Activated CD4-positive, alpha-beta memory T cell treated with anti-CD3 and anti-CD28 coated beads for 36 hours (primary cell): ENCODE measurements at regions of chr2 and their contacts with region 1.

Region 1: DNA sequence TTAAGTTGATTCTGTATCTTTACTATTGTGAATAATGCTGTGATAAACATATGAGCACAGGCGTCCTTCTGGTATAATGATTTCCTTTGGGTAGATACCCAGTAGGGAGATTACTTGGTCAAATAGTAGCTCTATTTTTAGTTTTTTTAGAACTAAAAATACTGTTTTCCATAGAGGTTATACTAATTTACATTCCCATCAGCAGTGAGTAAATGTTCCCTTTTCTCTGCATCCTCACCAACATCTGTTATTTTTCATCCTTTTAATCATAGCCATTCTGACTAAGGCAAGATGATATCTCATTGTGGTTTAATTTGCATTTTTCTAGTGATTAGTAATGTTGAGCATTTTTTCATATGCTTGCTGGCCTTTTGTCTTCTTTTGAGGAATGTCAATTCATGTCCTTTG is 35.1 kb downstream of the PMS1 start:
- DNase-seq: no peak
- H3K4me3 Mint-ChIP-seq: no peak overlapping the region
- H3K27ac Mint-ChIP-seq: peak overlapping the region; percentile 82
- H3K4me1 Mint-ChIP-seq: peaks cover 16% of the 10 kb centered on the region
- H3K27me3 Mint-ChIP-seq: no peaks in the 10 kb centered on the region

Region 2: GRCh38 chr2:189723192-189723591 is 96.1 kb before region 1 on chr2:
- CTCF ChIA-PET with region 1: no interaction called
- POLR2A ChIA-PET with region 1: no interaction called
- intact Hi-C with region 1: loop called (anchors 1 kb)
- DNase-seq: no peak
- H3K4me3 Mint-ChIP-seq: no peak overlapping the region
- H3K27ac Mint-ChIP-seq: no peak overlapping the region
- H3K4me1 Mint-ChIP-seq: peaks cover 13% of the 10 kb centered on the region
- H3K27me3 Mint-ChIP-seq: no peaks in the 10 kb centered on the region

Region 3: DNA sequence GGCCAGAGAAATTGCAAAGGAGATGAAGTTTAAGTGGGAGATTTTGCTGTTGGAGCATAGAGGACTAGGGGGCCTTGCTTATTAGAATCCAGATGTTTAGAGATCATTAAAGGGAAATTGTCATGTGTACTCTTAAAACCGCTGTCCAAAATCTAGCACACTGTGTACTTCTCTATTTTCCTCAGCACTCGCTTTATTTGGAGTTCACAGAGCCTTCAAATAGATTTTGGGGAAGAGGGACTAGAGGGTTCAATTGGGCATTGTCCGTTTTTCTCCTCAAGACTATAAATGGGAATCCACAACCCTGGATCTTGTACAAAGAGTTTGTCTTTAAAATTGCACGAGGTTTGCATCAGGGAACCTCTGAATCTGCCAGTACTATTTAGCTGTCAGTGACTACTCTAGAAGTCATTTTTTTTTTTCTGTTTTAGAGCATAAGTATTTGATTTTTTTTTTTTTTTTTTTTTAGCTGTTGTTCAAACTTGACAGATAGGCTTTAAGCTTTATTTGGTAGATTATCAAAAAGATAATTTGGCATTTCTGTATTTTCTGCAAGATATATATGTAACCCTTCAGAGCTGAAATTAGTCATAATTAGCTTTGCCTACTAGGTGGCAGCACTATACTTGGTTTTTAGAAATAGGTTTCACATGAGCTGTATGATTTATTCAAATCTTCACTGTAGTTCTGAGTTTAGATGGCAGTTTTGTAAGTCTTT is 20.8 kb before region 1 on chr2:
- CTCF ChIA-PET with region 1: interaction called, 4 read pairs
- POLR2A ChIA-PET with region 1: no interaction called
- intact Hi-C with region 1: loop called (anchors 1 kb)
- DNase-seq: no peak
- H3K4me3 Mint-ChIP-seq: no peak overlapping the region
- H3K27ac Mint-ChIP-seq: no peak overlapping the region
- H3K4me1 Mint-ChIP-seq: peaks cover 3% of the 10 kb centered on the region
- H3K27me3 Mint-ChIP-seq: no peaks in the 10 kb centered on the region

Region 4: GRCh38 chr2:189870381-189871085 is 51.2 kb after region 1 on chr2:
- CTCF ChIA-PET with region 1: no interaction called
- POLR2A ChIA-PET with region 1: no interaction called
- intact Hi-C with region 1: no loop called
- DNase-seq: no peak
- H3K4me3 Mint-ChIP-seq: no peak overlapping the region
- H3K27ac Mint-ChIP-seq: no peak overlapping the region
- H3K4me1 Mint-ChIP-seq: peaks cover 8% of the 10 kb centered on the region
- H3K27me3 Mint-ChIP-seq: no peaks in the 10 kb centered on the region